ENCODE measurements at regions of chr18 and their contacts with region 1.

Region 1: GRCh38 chr18:9066817-9067306 is 35.6 kb upstream of the NDUFV2 start:
- DNase-seq: no peak

Region 2: DNA sequence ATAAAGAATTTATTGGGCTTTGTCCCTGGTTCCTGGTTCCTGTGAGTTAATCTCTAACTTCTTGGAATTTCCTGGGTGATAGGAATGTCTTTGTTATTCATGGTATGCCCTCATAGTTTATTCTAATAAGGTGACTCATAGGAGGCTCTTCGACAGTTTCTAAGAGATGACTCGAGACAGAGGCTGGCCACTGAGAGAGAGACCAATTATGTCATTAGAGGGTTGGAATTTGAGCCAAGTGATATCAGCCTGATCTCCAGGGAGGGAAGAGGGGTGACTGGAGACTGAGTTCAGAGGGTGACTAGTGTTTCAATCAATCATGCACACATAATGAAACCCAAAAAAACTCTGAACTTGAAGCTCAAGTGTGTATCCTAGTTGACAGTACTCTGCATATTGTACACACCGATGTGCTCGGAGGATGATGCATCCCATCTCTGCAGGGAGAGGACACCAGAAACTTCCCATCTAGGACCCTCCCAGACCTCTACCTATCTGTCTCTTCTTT is 175.9 kb before region 1 on chr18:
- intact Hi-C with region 1: no loop called
- DNase-seq: no peak

Region 3: GRCh38 chr18:9516437-9517064 is 449.7 kb after region 1 on chr18:
- intact Hi-C with region 1: loop called (anchors 5 kb)
- DNase-seq: no peak

Measured in posterior cingulate gyrus (tissue), 11 donors.